ENCODE measurements at regions of chr4 and their contacts with region 1.

Region 1: GRCh38 chr4:95165926-95166524 is 382.7 kb downstream of the UNC5C start:
- DNase-seq: no peak

Region 2: DNA sequence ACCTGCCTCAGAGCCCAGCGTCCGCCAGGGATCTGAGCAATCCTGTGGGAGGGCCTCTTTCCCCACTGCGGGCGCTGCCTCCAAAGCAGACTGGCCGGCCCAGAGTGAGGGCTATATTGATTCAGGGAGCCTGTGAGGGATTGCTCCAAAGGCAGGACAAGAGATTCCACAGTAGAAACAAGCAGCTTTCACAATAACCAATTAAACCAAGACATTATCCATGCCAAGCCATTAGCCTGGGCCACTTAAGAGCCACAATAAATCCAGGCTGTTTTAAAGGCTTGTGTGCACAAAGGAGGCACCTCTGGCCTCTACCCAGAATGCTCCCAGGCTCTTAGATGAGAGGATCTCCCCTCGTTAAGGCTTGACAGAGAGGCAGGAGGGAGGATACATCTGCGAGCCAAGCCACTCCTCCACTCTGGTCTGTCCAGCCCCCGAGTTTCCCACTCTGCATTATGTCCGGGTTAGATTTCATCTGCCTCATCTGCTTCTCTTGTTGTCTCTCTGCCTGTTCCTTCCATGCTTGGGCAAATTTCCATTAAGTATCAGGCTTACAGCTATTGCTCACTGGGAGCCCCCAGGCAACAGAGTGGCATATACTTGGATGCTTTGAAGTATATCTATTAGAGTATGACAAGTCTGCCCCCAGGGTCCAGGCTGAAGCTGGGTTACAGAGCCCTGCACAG is 24.9 kb after region 1 on chr4:
- intact Hi-C with region 1: no loop called
- DNase-seq: no peak

Region 3: DNA sequence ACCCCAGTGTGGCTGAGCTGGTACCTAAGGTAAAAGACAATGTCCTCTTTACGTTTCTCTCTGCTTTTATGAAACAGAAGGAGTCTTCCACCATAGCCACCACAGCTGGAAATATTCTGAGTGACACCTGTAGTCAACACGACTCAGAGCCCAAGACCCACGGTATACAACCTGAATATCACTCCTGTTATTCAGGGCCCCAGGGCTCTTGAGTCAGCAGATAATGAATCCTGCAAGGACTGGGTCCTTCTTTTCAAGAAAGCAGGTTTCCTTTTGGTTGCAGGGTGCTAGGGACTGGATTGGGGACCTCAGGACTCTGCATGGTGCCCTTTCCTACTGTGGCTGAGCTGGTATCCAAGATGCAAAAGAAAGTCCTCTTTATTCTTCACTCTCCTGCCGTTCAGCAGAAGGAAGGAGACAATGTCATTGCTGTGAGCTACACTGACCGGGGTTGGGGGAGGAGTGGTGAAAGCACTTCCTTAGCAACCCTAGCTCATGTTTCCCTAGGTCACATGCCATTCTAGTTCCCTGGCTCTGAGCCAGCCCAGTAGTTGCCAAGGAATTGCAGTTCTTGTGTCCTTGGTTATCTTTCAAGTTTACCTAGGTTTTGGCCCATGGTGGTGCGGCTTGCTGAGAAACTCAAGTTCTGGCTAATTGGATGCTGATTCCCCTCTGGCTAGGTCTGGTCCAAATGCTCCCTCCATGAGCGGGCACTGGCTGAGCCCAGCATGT is 406.4 kb after region 1 on chr4:
- intact Hi-C with region 1: no loop called
- DNase-seq: no peak

Region 4: GRCh38 chr4:96035727-96036126 is 869.7 kb after region 1 on chr4:
- intact Hi-C with region 1: loop called (anchors 10 kb)
- DNase-seq: no peak